ENCODE measurements at regions of chr11 and their contacts with region 1.

Region 1: DNA sequence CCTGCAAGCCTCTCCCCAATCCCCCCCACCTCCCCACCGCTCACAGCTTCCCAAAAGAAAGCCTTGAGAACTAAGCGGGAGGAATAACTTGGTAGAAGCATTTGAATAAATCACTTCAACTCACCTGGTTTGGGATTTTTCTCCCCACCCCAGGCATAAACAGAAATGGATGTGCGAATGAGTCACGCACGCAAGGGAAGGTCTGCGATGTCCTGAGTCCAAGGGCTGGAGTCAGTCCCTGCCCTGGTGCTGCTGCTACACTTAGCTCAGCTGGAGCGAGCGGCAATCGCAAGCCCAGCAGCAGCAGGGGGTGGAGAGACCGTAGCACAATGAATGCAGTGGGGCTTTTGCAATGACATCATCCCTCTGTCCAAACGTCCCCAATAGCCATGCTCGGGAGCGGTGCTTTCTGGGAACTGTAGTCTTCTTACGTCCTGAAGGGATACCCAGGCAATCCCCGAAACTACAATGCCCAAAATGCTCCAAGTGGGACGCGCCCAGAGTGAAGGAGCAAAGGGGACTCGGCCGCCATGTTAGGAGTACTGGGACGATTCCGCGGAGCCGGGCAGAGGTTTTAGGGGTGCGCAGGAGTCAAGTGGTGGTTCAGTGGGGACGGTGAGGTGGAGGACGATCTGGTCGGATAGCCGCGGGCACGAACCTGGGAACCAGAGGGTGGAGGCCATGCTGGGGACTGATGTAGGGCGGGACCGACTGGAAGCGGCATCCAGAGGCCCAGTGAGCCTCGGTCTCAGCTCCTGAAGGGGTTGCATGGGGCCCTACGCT is at the start of gene RAB30:
- DNase-seq: peak; percentile 98
- ATAC-seq: peak; percentile 98
- H3K4me3 Mint-ChIP-seq: no peak within 1 kb of the TSS
- H3K27ac Mint-ChIP-seq: no peak within 1 kb of the TSS
- H3K4me1 Mint-ChIP-seq: peaks cover 45% of the 10 kb centered on the region
- H3K27me3 Mint-ChIP-seq: no peaks in the 10 kb centered on the region
- CTCF ChIP-seq: no peak
- total RNA-seq, gene RAB30: 9.8 to 10.9 TPM

Region 2: GRCh38 chr11:82321206-82321605 is 750.6 kb before region 1 on chr11:
- CTCF ChIA-PET with region 1: no interaction called
- POLR2A ChIA-PET with region 1: no interaction called
- intact Hi-C with region 1: no loop called
- DNase-seq: no peak
- ATAC-seq: no peak
- H3K4me3 Mint-ChIP-seq: no peak overlapping the region
- H3K27ac Mint-ChIP-seq: no peak overlapping the region
- H3K4me1 Mint-ChIP-seq: no peaks in the 10 kb centered on the region
- H3K27me3 Mint-ChIP-seq: no peaks in the 10 kb centered on the region
- CTCF ChIP-seq: no peak

Region 3: GRCh38 chr11:82900277-82901164 is 171.2 kb before region 1 on chr11 and contains the start of gene PRCP:
- CTCF ChIA-PET with region 1: interaction called, 4 read pairs
- POLR2A ChIA-PET with region 1: interaction called, 15 read pairs
- intact Hi-C with region 1: loop called (anchors 5 kb)
- DNase-seq: peak; percentile 98
- ATAC-seq: peak; percentile 80
- H3K4me3 Mint-ChIP-seq: peak within 1 kb of the TSS; percentile 79
- H3K27ac Mint-ChIP-seq: peak within 1 kb of the TSS; percentile 98
- H3K4me1 Mint-ChIP-seq: peaks cover 56% of the 10 kb centered on the region
- H3K27me3 Mint-ChIP-seq: no peaks in the 10 kb centered on the region
- CTCF ChIP-seq: no peak
- total RNA-seq, gene PRCP: 21.8 to 29.9 TPM

Region 4: DNA sequence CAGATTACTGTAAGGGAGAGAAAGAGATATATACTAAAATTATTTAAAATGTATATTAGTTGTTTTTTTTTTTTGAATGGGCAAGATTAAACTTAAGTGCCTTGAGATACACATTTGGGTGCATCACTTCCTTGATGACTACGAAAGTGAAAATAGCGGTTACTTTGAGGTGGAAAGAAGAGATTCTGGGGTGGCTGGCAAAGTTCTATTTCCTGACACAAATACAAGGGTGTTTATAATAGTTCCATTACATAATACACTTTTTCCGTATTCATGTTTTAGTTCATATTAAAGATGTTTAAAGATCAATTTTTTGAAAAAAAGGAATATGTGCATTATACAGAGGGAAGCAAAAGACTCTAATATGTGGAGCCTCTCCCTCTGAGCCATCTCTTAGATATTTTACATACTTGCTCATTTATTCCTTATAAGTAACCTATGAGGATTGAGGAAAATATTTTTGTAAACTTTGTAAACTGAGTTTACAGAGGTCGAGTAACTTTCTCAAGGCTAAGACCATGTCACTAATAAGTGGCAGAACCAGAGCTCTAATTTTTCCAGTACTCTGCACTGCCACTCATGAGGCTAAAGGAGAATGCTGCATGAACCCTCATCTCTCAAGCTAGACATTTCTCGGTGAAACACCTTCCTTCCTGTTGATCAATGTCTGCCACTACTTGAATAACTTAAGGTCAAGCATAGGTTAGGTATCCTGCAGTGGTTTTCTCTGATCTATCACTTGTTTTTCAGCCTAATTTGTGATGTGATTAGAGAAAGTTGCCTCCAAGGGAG is 111.6 kb before region 1 on chr11:
- CTCF ChIA-PET with region 1: interaction called, 3 read pairs
- POLR2A ChIA-PET with region 1: interaction called, 5 read pairs
- intact Hi-C with region 1: loop called (anchors 1 kb)
- DNase-seq: peak; percentile 65
- ATAC-seq: peak; percentile 82
- H3K4me3 Mint-ChIP-seq: peak overlapping the region; percentile 42
- H3K27ac Mint-ChIP-seq: peak overlapping the region; percentile 62
- H3K4me1 Mint-ChIP-seq: peaks cover 82% of the 10 kb centered on the region
- H3K27me3 Mint-ChIP-seq: no peaks in the 10 kb centered on the region
- CTCF ChIP-seq: no peak

Region 5: GRCh38 chr11:82975882-82976281 is 95.9 kb before region 1 on chr11:
- CTCF ChIA-PET with region 1: no interaction called
- POLR2A ChIA-PET with region 1: no interaction called
- intact Hi-C with region 1: no loop called
- DNase-seq: no peak
- ATAC-seq: no peak
- H3K4me3 Mint-ChIP-seq: no peak overlapping the region
- H3K27ac Mint-ChIP-seq: no peak overlapping the region
- H3K4me1 Mint-ChIP-seq: peaks cover 62% of the 10 kb centered on the region
- H3K27me3 Mint-ChIP-seq: no peaks in the 10 kb centered on the region
- CTCF ChIP-seq: no peak

Region 6: DNA sequence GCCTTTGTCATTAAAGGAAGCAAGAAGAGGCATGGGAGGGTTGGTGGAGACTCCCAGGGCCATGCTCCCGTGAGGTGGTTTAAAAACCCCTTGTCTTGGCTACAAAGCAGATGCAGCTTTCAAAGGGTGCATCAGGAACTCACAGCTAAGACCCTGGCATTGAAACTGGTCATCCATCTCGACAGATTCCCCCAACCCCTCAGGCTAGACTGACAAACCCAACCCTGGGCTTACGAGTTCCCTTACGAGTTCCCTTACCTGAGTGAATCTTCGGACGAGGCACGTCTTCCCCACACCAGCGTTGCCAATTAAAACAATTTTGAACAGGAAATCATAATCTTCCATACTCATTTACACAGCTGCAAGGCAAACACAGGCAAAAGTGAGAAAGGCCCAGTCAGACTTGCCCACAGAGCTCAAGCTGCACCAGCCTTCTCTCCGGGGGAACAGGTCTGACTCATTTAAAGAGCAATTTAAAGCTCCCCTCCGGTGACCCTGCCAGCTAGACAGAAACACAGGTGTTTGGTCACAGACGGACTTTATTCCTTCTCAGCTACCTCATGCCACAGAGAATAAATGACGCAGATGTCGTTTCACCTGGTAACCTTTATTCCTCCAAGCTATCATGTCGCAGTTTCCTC is 74.7 kb before region 1 on chr11:
- CTCF ChIA-PET with region 1: interaction called, 3 read pairs
- POLR2A ChIA-PET with region 1: interaction called, 4 read pairs
- intact Hi-C with region 1: loop called (anchors 5 kb)
- DNase-seq: peak; percentile 72
- ATAC-seq: peak; percentile 63
- H3K4me3 Mint-ChIP-seq: no peak overlapping the region
- H3K27ac Mint-ChIP-seq: peak overlapping the region; percentile 88
- H3K4me1 Mint-ChIP-seq: peaks cover 73% of the 10 kb centered on the region
- H3K27me3 Mint-ChIP-seq: no peaks in the 10 kb centered on the region
- CTCF ChIP-seq: no peak

Region 7: GRCh38 chr11:83007909-83008580 is 63.7 kb before region 1 on chr11:
- CTCF ChIA-PET with region 1: interaction called, 4 read pairs
- POLR2A ChIA-PET with region 1: interaction called, 13 read pairs
- intact Hi-C with region 1: no loop called
- DNase-seq: peak; percentile 15
- ATAC-seq: no peak
- H3K4me3 Mint-ChIP-seq: no peak overlapping the region
- H3K27ac Mint-ChIP-seq: peak overlapping the region; percentile 48
- H3K4me1 Mint-ChIP-seq: peaks cover 67% of the 10 kb centered on the region
- H3K27me3 Mint-ChIP-seq: no peaks in the 10 kb centered on the region
- CTCF ChIP-seq: no peak

Region 8: DNA sequence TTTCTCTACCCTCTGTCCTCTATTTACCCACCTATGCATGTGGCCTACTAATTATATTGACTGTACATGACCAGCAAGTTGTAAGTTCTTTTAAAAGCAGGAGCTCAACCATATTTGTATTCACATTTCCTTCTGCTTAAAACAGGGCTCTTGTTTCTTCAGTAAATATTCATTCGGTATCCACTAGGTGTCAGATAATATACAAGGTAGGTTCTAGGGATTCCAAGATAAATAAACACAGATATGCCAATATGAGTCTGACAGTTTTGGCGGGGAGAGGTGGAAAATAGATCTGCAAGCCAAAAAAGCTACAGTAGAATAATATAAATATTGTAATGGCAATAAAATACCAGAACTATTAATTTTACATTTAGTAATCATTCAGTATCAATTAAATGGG is 15.3 kb after region 1 on chr11:
- CTCF ChIA-PET with region 1: interaction called, 6 read pairs
- POLR2A ChIA-PET with region 1: interaction called, 13 read pairs
- intact Hi-C with region 1: no loop called
- DNase-seq: no peak
- ATAC-seq: no peak
- H3K4me3 Mint-ChIP-seq: no peak overlapping the region
- H3K27ac Mint-ChIP-seq: no peak overlapping the region
- H3K4me1 Mint-ChIP-seq: peaks cover 12% of the 10 kb centered on the region
- H3K27me3 Mint-ChIP-seq: no peaks in the 10 kb centered on the region
- CTCF ChIP-seq: no peak

Region 9: GRCh38 chr11:83193315-83194280 is 121.8 kb after region 1 on chr11 and contains the start of gene ANKRD42:
- CTCF ChIA-PET with region 1: interaction called, 3 read pairs
- POLR2A ChIA-PET with region 1: interaction called, 3 read pairs
- intact Hi-C with region 1: loop called (anchors 10 kb)
- DNase-seq: peak; percentile 92
- ATAC-seq: peak; percentile 77
- H3K4me3 Mint-ChIP-seq: peak within 1 kb of the TSS; percentile 98
- H3K27ac Mint-ChIP-seq: peak within 1 kb of the TSS; percentile 99
- H3K4me1 Mint-ChIP-seq: peaks cover 36% of the 10 kb centered on the region
- H3K27me3 Mint-ChIP-seq: no peaks in the 10 kb centered on the region
- CTCF ChIP-seq: no peak
- total RNA-seq, gene ANKRD42: 3.8 to 4.7 TPM

Measured in activated CD8-positive, alpha-beta T cell treated with anti-CD3 and anti-CD28 coated beads for 36 hours (primary cell).